HEK293 (cell line): ENCODE measurements at regions of chr5 and their contacts with region 1.

Region 1: DNA sequence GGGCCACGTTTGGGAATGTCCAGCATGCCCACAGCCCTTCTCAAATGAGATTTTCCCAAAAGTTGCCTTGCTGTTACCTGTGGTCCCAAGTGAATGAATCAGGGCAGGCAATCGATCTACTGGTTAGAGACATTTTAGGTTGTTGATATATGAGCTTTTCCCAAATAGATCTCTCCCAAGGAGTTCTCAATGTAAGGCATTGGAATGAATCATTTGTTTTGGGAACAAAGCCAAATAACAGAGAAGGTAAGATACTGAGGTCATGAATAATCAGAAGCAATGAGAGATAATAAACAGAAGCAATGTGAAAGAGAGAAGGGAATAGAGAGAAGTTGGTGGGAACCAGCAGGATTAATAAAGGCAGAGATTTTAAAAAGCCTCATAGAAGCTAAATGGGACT is 93.7 kb upstream of the FER start:
- H3K4me3 ChIP-seq: no peak overlapping the region
- H3K27ac ChIP-seq: no peak overlapping the region
- H3K4me1 ChIP-seq: peaks cover 11% of the 10 kb centered on the region
- CTCF ChIP-seq: no peak

Region 2: DNA sequence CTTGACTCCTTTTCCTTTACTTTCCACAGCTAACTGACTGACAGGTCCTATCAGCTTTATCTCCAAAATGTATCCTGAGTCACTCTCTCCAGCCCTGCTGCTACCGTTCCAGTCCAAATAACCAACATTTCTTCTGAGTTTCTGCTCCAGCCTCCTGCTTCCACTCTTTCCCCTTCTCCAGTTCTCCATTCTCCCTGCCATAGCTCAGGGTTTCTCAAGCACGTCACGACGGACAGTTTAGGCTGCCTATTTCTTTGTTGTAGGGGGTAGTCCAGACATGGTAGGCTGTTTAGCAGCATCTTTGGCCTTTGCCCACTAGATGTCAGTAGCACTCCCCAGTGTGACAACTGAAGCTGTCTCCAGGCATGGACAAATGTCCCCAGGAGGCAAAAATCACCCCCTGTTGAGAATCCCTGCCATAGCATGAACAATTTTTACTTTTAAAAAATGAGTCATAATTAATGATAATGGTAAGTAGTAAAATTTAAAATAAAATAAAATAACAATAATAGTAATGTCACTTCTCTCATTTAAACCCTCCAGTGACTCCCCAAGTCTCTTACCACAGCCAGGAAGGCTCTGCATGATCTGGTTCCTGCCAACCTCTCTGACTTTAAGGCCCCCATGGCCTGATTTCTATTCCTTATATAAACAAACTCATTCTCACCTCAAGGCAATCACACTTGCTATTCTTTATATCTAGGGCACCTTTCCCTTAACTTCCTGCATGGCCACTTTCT is 11.7 kb before region 1 on chr5:
- CTCF ChIA-PET with region 1: interaction called, 19 read pairs
- POLR2A ChIA-PET with region 1: no interaction called
- H3K4me3 ChIP-seq: peak overlapping the region; percentile 23
- H3K27ac ChIP-seq: 0 out of 2 replicates have a peak overlapping the region, but pooled peaks have one; percentile 27
- H3K4me1 ChIP-seq: no peaks in the 10 kb centered on the region
- CTCF ChIP-seq: peak; percentile 78